Sigmoid colon (tissue), 7 donors: ENCODE measurements at regions of chr12 and their contacts with region 1.

Region 1: DNA sequence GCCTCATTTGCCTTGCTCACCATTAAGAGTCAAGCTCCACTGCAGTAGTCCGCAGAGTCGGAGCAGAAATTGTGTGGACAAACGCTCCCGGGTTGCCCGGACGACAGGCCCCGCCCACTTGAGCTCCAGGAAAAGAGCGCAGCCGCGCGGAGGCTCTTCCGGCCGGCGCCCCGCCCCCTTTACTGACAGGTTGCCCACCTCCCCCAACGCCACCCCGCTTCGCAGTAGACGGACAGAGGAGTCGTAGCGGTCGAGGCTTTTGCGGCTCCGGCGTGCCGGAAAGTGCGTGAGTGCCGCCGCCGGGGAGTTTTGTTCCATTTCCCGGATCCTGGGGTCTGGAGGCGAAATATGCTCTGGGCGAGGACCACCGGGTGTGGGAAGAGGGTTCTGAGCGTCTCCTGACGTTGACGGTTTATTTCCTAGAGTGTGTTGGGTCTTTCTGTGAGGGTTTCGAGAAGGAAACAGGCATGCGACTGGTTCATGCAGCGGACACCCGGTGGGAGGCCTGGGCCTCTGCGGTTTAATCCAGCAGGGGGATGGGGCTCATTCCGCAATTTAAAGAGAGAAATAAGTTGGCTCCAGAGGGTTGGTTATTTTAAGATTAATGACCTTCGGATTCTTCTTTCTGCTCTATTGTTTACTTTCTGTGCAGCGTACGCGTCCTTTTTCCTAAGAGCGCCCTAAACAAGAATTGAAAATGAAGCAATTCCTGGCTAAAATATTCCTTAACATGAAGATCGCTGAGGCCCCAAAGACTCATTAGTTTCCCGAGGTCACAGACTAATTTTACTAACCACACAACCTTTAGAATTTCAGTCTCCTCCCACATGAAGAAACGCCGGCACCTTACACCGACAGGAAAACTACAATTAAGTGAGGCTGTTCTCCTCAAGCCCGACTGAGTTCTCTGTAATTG is at the starts of genes DNAI7 and ETFRF1:
- DNase-seq: peak; percentile 99
- H3K4me3 ChIP-seq: peak within 1 kb of the TSS; percentile 54 to 78 (median 64)
- H3K27ac ChIP-seq: peak within 1 kb of the TSS; percentile 93 to 96 (median 94)
- H3K4me1 ChIP-seq: peaks cover 0 to 22% (median 18%) of the 10 kb centered on the region in 4 donors
- H3K27me3 ChIP-seq: no peaks in the 10 kb centered on the region
- CTCF ChIP-seq: peak in 2 of 4 experiments; percentile 24 to 28
- EP300 ChIP-seq: peak in 1 of 4 donors; percentile 38
- POLR2A ChIP-seq: peak; percentile 75 to 85
- total RNA-seq, gene DNAI7: 0.36 to 1.2 (median 1.1) TPM in 3 of 4 donors, not detected in the other
- total RNA-seq, gene ETFRF1: 38.0 to 63.5 (median 49.4) TPM

Region 2: GRCh38 chr12:25241167-25242020 is 46.1 kb after region 1 on chr12:
- intact Hi-C with region 1: loop called (anchors 5 kb)
- DNase-seq: no peak
- H3K4me3 ChIP-seq: no peak overlapping the region
- H3K27ac ChIP-seq: peak overlapping the region; percentile 30 to 57 (median 42)
- H3K4me1 ChIP-seq: peaks cover 0 to 20% (median 5%) of the 10 kb centered on the region in 4 donors
- H3K27me3 ChIP-seq: no peaks in the 10 kb centered on the region
- CTCF ChIP-seq: peak in 3 of 4 experiments; percentile 48 to 66 (median 65)
- EP300 ChIP-seq: no peak
- POLR2A ChIP-seq: no peak

Region 3: GRCh38 chr12:25250744-25251730 is 55.7 kb after region 1 on chr12 and contains the start of gene KRAS:
- intact Hi-C with region 1: loop called (anchors 2 kb)
- DNase-seq: peak; percentile 99
- H3K4me3 ChIP-seq: peak within 1 kb of the TSS; percentile 68 to 100 (median 87)
- H3K27ac ChIP-seq: peak within 1 kb of the TSS; percentile 91 to 99 (median 96)
- H3K4me1 ChIP-seq: peaks cover 0 to 31% (median 18%) of the 10 kb centered on the region in 4 donors
- H3K27me3 ChIP-seq: no peaks in the 10 kb centered on the region
- CTCF ChIP-seq: no peak
- EP300 ChIP-seq: peak in 1 of 4 donors; percentile 5
- POLR2A ChIP-seq: peak; percentile 46 to 48
- total RNA-seq, gene KRAS: 19.4 to 24.0 (median 22.5) TPM

Region 4: DNA sequence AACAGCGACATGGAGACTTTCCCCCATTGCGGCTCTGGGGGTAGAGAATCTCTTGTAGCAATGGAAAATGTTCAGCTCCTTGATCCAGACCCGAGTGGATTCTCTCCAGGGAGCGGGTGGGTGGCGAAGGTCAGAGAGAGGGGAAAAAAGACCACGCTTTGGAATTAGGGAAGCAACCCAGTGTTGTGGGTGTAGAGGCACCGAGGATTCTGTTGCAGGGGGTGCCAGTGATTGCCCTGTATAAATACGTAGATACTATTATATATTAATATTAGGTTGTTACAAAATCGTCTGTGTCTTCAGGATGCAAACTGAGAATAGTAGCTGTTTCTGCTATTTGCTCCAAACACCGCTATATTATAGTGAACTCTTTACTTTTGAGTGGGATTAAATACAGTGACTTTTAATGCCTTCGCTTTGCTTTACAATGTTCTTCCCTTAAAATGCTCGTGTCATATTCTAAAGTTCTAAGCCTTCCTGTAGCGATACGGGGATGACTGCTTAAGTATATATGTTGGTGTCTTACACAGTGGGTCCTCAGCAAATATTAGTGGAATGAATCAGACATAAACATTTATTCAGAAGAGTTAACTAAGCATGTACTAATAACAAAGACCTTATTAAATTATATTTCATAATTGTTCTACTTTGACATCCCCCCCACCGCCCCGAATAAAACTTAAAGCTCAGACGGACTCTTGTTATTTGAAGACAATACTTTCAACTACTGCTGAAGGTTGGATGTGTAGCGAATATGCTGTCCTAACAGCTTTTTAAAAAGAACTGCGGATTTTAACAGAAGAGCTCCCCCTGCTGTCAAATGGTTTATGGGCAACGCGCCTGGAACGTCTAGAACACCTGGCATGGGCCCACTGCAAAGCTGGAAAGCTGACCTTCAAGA is 191.8 kb after region 1 on chr12:
- intact Hi-C with region 1: loop called (anchors 1 kb)
- DNase-seq: peak; percentile 94
- H3K4me3 ChIP-seq: peak overlapping the region; percentile 72 to 82 (median 76)
- H3K27ac ChIP-seq: peak overlapping the region; percentile 99 to 100 (median 99)
- H3K4me1 ChIP-seq: peaks cover 0 to 7% (median 3%) of the 10 kb centered on the region in 4 donors
- H3K27me3 ChIP-seq: no peaks in the 10 kb centered on the region
- CTCF ChIP-seq: peak in 3 of 4 experiments; percentile 72 to 83 (median 75)
- EP300 ChIP-seq: no peak
- POLR2A ChIP-seq: no peak

Region 5: DNA sequence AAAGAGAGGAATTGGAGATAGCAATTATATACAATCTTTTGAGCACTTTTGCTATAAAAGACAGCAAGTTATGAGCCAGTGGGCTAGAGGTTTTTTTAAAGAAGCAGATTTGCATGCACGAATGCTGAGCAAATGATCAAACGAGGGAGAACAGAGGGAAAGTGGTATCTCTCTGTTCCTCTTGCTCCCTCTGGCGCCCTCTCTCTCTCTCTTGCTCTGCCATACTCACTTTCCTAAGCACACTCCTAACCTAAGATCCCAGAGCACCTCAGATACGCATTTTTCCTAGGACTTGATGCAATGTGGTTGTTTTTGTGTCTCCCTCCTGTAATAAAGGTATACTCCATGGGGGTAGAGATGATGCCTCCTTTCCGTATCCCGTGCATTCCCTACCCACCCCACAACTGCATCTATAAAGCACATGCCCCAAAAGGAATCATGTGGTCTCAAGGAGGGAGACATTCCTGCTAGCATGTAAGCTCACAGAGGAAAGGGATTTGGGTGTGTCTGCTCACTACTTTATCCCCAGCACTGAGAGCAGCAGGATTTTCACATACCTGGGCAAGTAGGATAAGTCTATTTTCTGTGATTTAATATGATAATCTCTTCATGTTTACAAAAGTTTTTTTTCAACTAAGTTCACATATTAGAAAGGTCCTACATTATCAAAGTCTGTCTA is 1270.2 kb after region 1 on chr12:
- intact Hi-C with region 1: no loop called
- DNase-seq: no peak
- H3K4me3 ChIP-seq: no peak overlapping the region
- H3K27ac ChIP-seq: no peak overlapping the region
- H3K4me1 ChIP-seq: no peaks in the 10 kb centered on the region
- H3K27me3 ChIP-seq: no peaks in the 10 kb centered on the region
- CTCF ChIP-seq: no peak
- EP300 ChIP-seq: no peak
- POLR2A ChIP-seq: no peak